K562 (cell line): ENCODE measurements at regions of chr5 and their contacts with region 1.

Region 1: GRCh38 chr5:76715736-76716455 is at the start of gene F2R:
- DNase-seq: peak; percentile 79 to 85 (median 80)
- ATAC-seq: peak; percentile 94
- H3K4me3 ChIP-seq: peak within 1 kb of the TSS; percentile 92
- H3K27ac ChIP-seq: peak within 1 kb of the TSS; percentile 83
- H3K4me1 ChIP-seq: peaks cover 10 to 18% of the 10 kb centered on the region in 2 experiments; a peak in 4 of 5 replicates
- H3K27me3 ChIP-seq: no peaks in the 10 kb centered on the region
- CTCF ChIP-seq: peak; percentile 34 to 76 (median 54); a peak in 5 of 6 replicates
- EP300 ChIP-seq: no peak
- POLR2A ChIP-seq: peak; percentile 66
- RAD21 ChIP-seq: peak; percentile 58 to 59
- polyA plus RNA-seq, gene F2R: 4.0 to 4.9 TPM

Region 2: DNA sequence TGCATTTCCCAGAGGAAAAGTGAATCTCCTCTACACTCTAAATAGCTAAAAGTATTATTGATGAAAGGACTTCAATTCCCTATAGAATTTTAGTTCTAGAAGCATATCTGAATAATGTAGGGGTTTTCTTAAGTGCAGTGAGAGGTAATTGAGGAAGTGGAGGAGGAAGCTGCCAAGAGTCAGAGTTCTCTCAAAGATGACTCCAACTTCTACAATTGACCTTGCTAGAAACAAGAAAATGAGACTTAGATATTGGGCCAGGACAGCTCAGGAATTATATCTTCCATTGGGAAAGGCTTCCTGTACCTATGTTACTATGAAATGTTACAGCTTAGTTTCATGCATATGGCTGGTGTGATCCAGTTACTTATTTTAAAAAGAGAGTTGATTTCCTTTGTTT is 10.3 kb before region 1 on chr5:
- CTCF ChIA-PET with region 1: no interaction called
- POLR2A ChIA-PET with region 1: interaction called, 12 read pairs
- in situ Hi-C with region 1: no loop called
- intact Hi-C with region 1: no loop called
- DNase-seq: no peak
- ATAC-seq: no peak
- H3K4me3 ChIP-seq: no peak overlapping the region
- H3K27ac ChIP-seq: no peak overlapping the region
- H3K4me1 ChIP-seq: no peaks in the 10 kb centered on the region
- H3K27me3 ChIP-seq: no peaks in the 10 kb centered on the region
- CTCF ChIP-seq: no peak
- EP300 ChIP-seq: no peak
- POLR2A ChIP-seq: no peak
- RAD21 ChIP-seq: no peak

Region 3: DNA sequence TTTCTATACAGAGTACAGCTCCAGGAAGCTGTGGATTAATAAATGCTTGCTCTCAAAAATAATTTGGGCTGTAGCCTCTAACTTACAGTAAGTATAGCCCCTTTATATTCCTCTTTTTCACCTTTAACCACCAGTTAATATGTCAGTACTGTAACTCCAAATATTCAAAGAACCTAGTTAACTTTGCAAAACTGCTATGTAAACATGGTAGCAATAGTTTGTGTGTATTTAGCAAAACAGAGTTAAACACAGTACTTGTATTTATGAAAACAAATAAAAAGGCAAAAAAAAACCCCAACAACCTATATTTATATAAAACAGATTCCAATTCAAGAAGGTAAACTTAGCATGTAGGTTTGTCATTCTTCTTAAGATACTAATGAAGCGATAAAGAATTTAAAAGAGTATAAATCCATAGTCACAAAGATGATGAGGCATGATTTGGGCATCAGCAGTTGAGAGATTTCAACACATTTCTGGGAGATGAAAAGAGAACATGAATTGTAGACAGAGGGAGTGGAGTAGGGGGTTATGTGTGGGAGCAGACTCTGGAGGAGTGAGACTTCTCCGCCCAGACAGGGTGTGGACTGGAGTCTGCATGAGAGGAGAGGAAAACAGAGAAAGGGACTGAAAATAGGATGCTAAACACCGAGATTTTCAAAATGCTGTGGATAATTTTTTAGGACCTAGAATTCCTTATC is 56.0 kb after region 1 on chr5:
- CTCF ChIA-PET with region 1: interaction called, 12 read pairs
- POLR2A ChIA-PET with region 1: no interaction called
- in situ Hi-C with region 1: no loop called
- intact Hi-C with region 1: loop called (anchors 1 kb)
- DNase-seq: peak in 1 of 4 experiments; percentile 19
- ATAC-seq: peak; percentile 52; the same call in 1 of the 3 replicates
- H3K4me3 ChIP-seq: no peak overlapping the region
- H3K27ac ChIP-seq: no peak overlapping the region
- H3K4me1 ChIP-seq: peaks cover 0 to 4% of the 10 kb centered on the region in 2 experiments; a peak in 2 of 5 replicates
- H3K27me3 ChIP-seq: no peaks in the 10 kb centered on the region
- CTCF ChIP-seq: no peak
- EP300 ChIP-seq: no peak
- POLR2A ChIP-seq: no peak
- RAD21 ChIP-seq: no peak